HepG2 (cell line): ENCODE measurements at regions of chr22 and their contacts with region 1.

Region 1: DNA sequence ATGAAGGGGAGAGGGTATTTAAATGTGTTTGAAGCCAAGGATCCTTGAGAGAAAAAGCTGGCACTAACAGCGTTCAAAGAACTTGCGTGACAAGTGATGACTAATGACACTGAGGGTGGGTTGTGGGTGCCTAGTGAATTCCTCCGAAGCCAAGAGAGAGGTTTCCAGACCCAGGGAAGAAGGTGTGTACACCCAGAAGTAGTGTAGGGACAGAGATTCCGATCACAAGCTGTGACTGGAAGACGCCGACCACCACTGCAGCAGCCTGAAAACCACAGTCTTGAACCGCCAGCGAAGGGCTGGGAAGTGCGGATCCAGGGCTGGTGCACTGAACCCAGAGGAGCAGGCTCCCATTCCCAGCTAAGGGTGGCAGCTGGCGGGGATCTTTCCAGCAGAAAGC is 9.5 kb downstream of the PPARA start:
- DNase-seq: no peak
- ATAC-seq: no peak
- H3K4me3 ChIP-seq: no peak overlapping the region
- H3K27ac ChIP-seq: peak overlapping the region; percentile 39
- H3K4me1 ChIP-seq: peaks cover 69% of the 10 kb centered on the region
- H3K27me3 ChIP-seq: no peaks in the 10 kb centered on the region
- CTCF ChIP-seq: no peak
- EP300 ChIP-seq: no peak
- POLR2A ChIP-seq: no peak
- RAD21 ChIP-seq: no peak

Region 2: GRCh38 chr22:46131151-46131587 is 28.6 kb before region 1 on chr22:
- CTCF ChIA-PET with region 1: no interaction called
- POLR2A ChIA-PET with region 1: no interaction called
- in situ Hi-C with region 1: no loop called
- intact Hi-C with region 1: no loop called
- DNase-seq: no peak
- ATAC-seq: peak; percentile 10; the same call in 1 of the 3 replicates
- H3K4me3 ChIP-seq: no peak overlapping the region
- H3K27ac ChIP-seq: no peak overlapping the region
- H3K4me1 ChIP-seq: peaks cover 93% of the 10 kb centered on the region
- H3K27me3 ChIP-seq: peaks cover 4 to 12% of the 10 kb centered on the region in 2 experiments; a peak in 4 of 5 replicates
- CTCF ChIP-seq: peak; percentile 76
- EP300 ChIP-seq: no peak
- POLR2A ChIP-seq: no peak
- RAD21 ChIP-seq: 0 out of 2 replicates have a peak, but pooled peaks have one; percentile 26

Region 3: GRCh38 chr22:46196278-46196677 is 36.5 kb after region 1 on chr22:
- CTCF ChIA-PET with region 1: no interaction called
- POLR2A ChIA-PET with region 1: no interaction called
- in situ Hi-C with region 1: no loop called
- intact Hi-C with region 1: loop called (anchors 1 kb)
- DNase-seq: no peak
- ATAC-seq: no peak
- H3K4me3 ChIP-seq: no peak overlapping the region
- H3K27ac ChIP-seq: no peak overlapping the region
- H3K4me1 ChIP-seq: peaks cover 20% of the 10 kb centered on the region
- H3K27me3 ChIP-seq: no peaks in the 10 kb centered on the region
- CTCF ChIP-seq: no peak
- EP300 ChIP-seq: no peak
- POLR2A ChIP-seq: no peak
- RAD21 ChIP-seq: no peak